ENCODE measurements at regions of chr10 and their contacts with region 1.

Region 1: GRCh38 chr10:93288654-93289634 is 193.2 kb downstream of the MYOF start:
- DNase-seq: peak; percentile 93 to 96
- H3K4me3 ChIP-seq: no peak overlapping the region
- H3K4me3 Mint-ChIP-seq: peak overlapping the region; percentile 55
- H3K27ac Mint-ChIP-seq: peak overlapping the region; percentile 92
- H3K4me1 ChIP-seq: peaks cover 45% of the 10 kb centered on the region
- H3K4me1 Mint-ChIP-seq: peaks cover 34% of the 10 kb centered on the region
- H3K27me3 ChIP-seq: no peaks in the 10 kb centered on the region
- H3K27me3 Mint-ChIP-seq: no peaks in the 10 kb centered on the region
- CTCF ChIP-seq: peak; percentile 77 to 91

Region 2: DNA sequence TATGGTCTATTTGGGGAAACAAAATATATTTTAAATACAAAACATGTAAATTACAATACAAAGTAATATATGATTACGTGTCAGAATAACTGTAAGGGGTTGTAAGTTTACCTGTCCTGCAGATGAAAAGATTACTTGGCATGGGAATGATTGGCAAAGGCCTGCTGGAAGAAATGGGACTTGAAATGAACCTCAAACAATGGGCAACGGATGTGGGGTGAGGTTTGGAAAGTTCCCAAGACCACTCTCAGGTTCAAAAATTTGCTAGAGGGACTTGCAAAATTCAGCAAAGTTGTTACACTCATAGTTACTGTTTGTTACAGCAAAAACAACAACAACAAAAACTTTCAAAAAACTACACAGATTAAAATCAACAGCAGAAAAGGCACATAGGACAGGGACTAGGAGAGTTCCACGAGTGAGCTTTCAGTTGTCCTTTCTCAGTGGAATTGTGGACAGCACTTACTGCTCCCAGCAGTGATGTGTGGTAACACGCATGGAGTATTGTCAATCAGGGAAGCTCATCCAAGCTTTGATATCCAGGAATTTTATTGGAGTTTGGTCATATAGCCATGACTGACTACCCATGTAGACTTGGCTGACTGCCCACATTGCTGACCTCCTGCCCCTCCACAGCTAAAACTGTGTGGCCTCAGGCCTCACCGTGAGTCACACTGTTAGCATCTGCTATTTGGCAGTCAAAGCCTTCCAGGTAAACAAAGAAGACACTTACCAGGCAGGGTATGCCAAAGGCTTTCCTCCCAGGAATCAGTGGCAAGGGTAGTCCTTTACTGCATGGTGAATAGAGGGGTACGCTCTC is 396.8 kb before region 1 on chr10:
- CTCF ChIA-PET with region 1: no interaction called
- POLR2A ChIA-PET with region 1: no interaction called
- intact Hi-C with region 1: loop called (anchors 2 kb)
- DNase-seq: peak; percentile 75 to 94
- H3K4me3 ChIP-seq: no peak overlapping the region
- H3K4me3 Mint-ChIP-seq: peak overlapping the region; percentile 57
- H3K27ac Mint-ChIP-seq: peak overlapping the region; percentile 84
- H3K4me1 ChIP-seq: peaks cover 64% of the 10 kb centered on the region
- H3K4me1 Mint-ChIP-seq: peaks cover 10% of the 10 kb centered on the region
- H3K27me3 ChIP-seq: no peaks in the 10 kb centered on the region
- H3K27me3 Mint-ChIP-seq: no peaks in the 10 kb centered on the region
- CTCF ChIP-seq: no peak

Region 3: GRCh38 chr10:93068411-93069244 is 220.3 kb before region 1 on chr10:
- CTCF ChIA-PET with region 1: interaction called, 5 read pairs
- POLR2A ChIA-PET with region 1: no interaction called
- intact Hi-C with region 1: loop called (anchors 2 kb)
- DNase-seq: peak in 1 of 2 experiments; percentile 57
- H3K4me3 ChIP-seq: peak overlapping the region; percentile 30
- H3K4me3 Mint-ChIP-seq: peak overlapping the region; percentile 63
- H3K27ac Mint-ChIP-seq: no peak overlapping the region
- H3K4me1 ChIP-seq: peaks cover 11% of the 10 kb centered on the region
- H3K4me1 Mint-ChIP-seq: no peaks in the 10 kb centered on the region
- H3K27me3 ChIP-seq: peaks cover 5% of the 10 kb centered on the region; the same call in 1 of the 2 replicates
- H3K27me3 Mint-ChIP-seq: peaks cover 14% of the 10 kb centered on the region
- CTCF ChIP-seq: no peak

Region 4: DNA sequence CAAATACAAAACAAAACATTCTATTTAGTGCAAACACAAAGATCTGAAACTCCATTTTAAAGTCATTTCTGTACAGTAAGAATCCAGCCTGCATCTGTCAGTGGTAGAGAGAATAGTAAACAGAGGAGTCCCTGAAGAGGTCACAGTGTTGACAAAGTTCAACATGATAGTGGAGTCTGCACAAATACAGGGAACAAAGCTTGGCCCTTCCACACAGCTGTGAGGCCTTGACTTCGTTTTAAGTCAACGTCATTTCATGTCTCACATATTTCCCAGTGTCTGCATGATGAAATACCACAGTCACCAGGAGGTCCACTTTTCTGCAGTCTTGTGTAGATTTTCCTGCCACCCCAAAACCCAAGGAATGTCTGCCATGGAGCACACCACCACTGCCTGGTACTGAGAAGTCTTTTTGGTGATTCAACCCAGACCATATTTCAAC is 182.3 kb before region 1 on chr10:
- CTCF ChIA-PET with region 1: no interaction called
- POLR2A ChIA-PET with region 1: no interaction called
- intact Hi-C with region 1: loop called (anchors 2 kb)
- DNase-seq: peak; percentile 66 to 69
- H3K4me3 ChIP-seq: no peak overlapping the region
- H3K4me3 Mint-ChIP-seq: no peak overlapping the region
- H3K27ac Mint-ChIP-seq: peak overlapping the region; percentile 7
- H3K4me1 ChIP-seq: peaks cover 13% of the 10 kb centered on the region
- H3K4me1 Mint-ChIP-seq: peaks cover 14% of the 10 kb centered on the region
- H3K27me3 ChIP-seq: no peaks in the 10 kb centered on the region
- H3K27me3 Mint-ChIP-seq: no peaks in the 10 kb centered on the region
- CTCF ChIP-seq: no peak

Region 5: GRCh38 chr10:93224005-93224779 is 64.8 kb before region 1 on chr10:
- CTCF ChIA-PET with region 1: no interaction called
- POLR2A ChIA-PET with region 1: no interaction called
- intact Hi-C with region 1: loop called (anchors 5 kb)
- DNase-seq: no peak
- H3K4me3 ChIP-seq: no peak overlapping the region
- H3K4me3 Mint-ChIP-seq: no peak overlapping the region
- H3K27ac Mint-ChIP-seq: no peak overlapping the region
- H3K4me1 ChIP-seq: no peaks in the 10 kb centered on the region
- H3K4me1 Mint-ChIP-seq: no peaks in the 10 kb centered on the region
- H3K27me3 ChIP-seq: no peaks in the 10 kb centered on the region
- H3K27me3 Mint-ChIP-seq: no peaks in the 10 kb centered on the region
- CTCF ChIP-seq: peak in 1 of 2 experiments; percentile 30

Region 6: DNA sequence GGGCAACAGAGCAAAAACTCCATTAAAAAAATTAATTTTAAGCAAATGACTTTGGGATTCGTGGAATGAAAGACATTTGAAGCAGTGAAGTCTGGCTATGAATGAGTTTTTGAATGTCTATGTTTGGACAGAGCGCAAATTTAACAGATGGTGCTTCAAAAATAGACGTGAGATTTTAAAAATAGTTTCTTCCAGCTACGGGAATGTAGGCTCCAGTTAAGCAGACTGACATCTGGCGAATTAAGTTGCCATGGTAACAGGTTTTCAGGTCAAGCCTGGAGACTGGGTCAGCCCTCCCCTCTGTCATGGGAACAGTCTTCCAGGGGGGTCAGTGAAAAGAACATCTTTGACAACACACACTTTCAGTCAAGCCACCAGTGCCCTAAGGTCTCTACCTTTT is 131.1 kb after region 1 on chr10:
- CTCF ChIA-PET with region 1: no interaction called
- POLR2A ChIA-PET with region 1: no interaction called
- intact Hi-C with region 1: no loop called
- DNase-seq: no peak
- H3K4me3 ChIP-seq: no peak overlapping the region
- H3K4me3 Mint-ChIP-seq: no peak overlapping the region
- H3K27ac Mint-ChIP-seq: peak overlapping the region; percentile 42
- H3K4me1 ChIP-seq: peaks cover 67% of the 10 kb centered on the region
- H3K4me1 Mint-ChIP-seq: peaks cover 61% of the 10 kb centered on the region
- H3K27me3 ChIP-seq: no peaks in the 10 kb centered on the region
- H3K27me3 Mint-ChIP-seq: no peaks in the 10 kb centered on the region
- CTCF ChIP-seq: no peak